ENCODE measurements at regions of chr12 and their contacts with region 1.

Region 1: DNA sequence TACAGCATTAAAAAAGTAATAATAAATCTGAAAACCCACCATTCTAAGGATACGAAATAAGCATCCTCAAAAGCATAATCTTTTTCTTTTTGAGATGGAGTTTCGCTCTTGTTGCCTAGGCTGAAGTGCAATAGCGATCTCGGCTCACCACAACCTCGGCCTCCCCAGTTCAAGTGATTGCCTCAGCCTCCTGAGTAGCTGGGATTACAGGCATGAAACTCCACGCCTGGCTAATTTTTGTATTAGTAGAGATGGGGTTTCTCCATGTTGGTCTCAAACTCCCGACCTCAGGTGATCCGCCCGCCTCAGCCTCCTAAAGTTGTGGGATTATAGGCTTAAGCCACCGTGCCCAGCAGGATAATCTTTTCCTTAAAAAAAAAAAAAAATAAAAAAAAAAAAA is 4.3 kb downstream of the CCNT1 start:
- DNase-seq: no peak
- ATAC-seq: no peak
- H3K4me3 ChIP-seq: no peak overlapping the region
- H3K4me3 Mint-ChIP-seq: no peak overlapping the region
- H3K27ac ChIP-seq: no peak overlapping the region
- H3K27ac Mint-ChIP-seq: no peak overlapping the region
- H3K4me1 ChIP-seq: peaks cover 15 to 42% of the 10 kb centered on the region in 2 experiments
- H3K4me1 Mint-ChIP-seq: peaks cover 59 to 69% (median 64%) of the 10 kb centered on the region in 3 donors
- H3K27me3 ChIP-seq: no peaks in the 10 kb centered on the region
- H3K27me3 Mint-ChIP-seq: no peaks in the 10 kb centered on the region

Region 2: DNA sequence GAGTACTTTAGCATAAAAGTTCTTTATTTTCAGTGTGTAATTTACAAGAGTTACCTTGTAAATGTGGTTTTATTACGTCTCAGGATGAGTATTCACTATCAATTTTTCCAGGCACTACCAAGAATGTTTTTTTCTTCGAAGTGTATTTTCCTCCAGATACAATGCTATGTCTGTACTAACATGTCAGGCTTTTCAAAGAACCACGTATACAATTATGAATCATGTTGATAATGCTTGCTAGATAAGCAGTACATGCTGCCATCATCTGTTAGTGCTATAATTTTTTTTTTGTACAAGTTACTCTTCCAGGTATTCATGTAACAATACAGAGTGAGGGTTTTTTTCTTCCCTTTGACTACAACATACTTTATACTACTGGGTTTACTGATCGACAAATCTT is 24.6 kb before region 1 on chr12:
- CTCF ChIA-PET with region 1: interaction called in 1 of 2 experiments, 3 read pairs
- POLR2A ChIA-PET with region 1: interaction called, 3 to 12 read pairs
- DNase-seq: no peak
- ATAC-seq: no peak
- H3K4me3 ChIP-seq: no peak overlapping the region
- H3K4me3 Mint-ChIP-seq: no peak overlapping the region
- H3K27ac ChIP-seq: no peak overlapping the region
- H3K27ac Mint-ChIP-seq: peak overlapping the region in 1 of 2 donors; percentile 28
- H3K4me1 ChIP-seq: peaks cover 2 to 3% of the 10 kb centered on the region in 2 experiments
- H3K4me1 Mint-ChIP-seq: peaks cover 14 to 20% (median 16%) of the 10 kb centered on the region in 3 donors
- H3K27me3 ChIP-seq: no peaks in the 10 kb centered on the region
- H3K27me3 Mint-ChIP-seq: no peaks in the 10 kb centered on the region